Ascending aorta (tissue), 2 donors: ENCODE measurements at regions of chr18 and their contacts with region 1.

Region 1: DNA sequence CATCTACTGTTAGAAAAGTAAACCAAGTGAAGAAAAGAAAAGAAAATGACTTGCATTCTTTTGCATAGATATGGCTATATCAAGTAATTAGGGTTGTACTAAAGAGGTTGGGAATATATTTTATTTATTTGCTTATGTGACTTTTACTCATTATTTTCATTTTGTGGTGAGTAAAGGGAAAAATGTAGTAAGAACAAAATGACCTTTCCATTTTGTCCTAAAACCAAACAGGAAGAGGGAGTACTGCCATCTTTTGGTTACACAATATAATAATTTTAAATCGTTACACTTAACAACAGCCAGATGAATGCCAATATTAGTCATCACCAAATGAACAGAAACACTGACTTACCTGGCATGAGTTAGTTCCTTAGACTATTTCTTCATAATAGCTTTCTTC is 47.3 kb upstream of the NDUFV2 start:
- DNase-seq: no peak
- H3K4me3 ChIP-seq: no peak overlapping the region
- H3K27ac ChIP-seq: peak overlapping the region; percentile 52 to 57
- H3K4me1 ChIP-seq: peaks cover 0 to 7% of the 10 kb centered on the region in 2 donors
- H3K27me3 ChIP-seq: no peaks in the 10 kb centered on the region
- CTCF ChIP-seq: no peak

Region 2: DNA sequence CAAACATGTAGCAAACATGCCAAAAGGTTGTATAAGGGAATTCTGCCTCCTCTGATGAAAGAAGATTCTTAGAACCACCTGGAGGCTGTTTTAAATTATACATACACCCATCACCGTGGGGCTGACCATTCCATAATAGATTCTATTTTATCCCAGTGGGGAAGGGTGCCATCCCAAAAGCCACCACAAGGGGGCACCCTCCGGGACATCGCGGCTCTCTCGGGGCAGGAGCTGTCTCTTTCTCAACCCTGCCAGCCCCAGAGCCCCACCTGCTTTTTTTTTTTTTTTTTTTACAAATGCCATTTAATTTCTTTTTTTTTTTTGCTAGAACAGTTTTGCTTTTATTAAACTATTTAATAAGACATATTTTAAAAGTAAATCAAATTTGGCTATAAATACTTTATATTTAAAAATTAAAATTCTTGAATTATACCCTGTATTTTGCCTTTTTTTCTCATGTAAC is 358.4 kb before region 1 on chr18:
- intact Hi-C with region 1: loop called (anchors 1 kb)
- DNase-seq: peak in 1 of 2 donors; percentile 87
- H3K4me3 ChIP-seq: no peak overlapping the region
- H3K27ac ChIP-seq: no peak overlapping the region
- H3K4me1 ChIP-seq: no peaks in the 10 kb centered on the region
- H3K27me3 ChIP-seq: no peaks in the 10 kb centered on the region
- CTCF ChIP-seq: peak; percentile 69 to 90 (median 85)

Region 3: DNA sequence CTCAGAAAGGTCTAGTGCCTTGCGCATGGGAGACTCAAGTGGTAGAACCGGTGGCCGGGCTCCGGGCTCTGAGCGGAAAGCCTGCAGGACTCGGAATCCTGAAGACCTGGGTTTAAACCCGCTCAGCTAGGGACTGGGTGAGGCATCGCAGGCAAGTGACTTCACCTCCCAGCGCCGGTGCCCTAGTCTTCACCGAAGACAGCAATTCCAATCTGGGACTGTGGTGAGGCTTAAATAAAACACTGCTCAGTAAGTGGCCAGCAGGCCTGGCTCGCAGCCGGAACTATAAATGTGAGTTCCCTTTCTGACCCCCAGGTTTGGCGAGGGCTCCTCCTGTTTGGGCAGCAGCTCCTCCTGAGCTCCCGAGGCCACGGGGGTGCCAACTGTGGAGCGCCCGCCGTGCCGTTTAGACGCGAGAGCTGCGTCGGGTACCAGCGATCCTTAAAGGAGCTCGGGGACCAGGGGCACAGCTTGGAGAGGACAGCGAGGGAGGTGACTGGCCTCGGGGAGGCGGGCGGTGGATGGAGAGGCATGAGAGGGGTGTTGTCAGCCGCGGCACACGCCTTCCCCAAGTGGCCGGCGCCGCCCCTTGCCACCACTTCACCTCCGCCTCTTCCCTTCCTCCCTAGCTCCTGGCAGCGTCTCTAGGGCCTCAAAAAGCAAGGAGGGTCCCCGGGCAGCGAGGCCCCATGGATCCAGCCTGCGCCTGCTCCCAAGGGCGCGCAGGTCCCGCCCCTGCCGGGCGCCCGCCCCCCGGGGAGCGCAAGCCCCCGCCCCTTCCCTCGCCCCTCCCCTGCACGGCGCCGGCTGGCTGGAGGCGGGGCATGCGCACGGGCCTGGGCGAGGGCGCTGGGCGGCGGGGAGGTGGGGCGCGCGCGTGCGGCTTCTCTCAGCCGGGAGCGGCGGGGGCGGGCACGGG is 350.6 kb before region 1 on chr18:
- intact Hi-C with region 1: loop called (anchors 2 kb)
- DNase-seq: peak; percentile 39 to 92
- H3K4me3 ChIP-seq: peak overlapping the region; percentile 79 to 97
- H3K27ac ChIP-seq: peak overlapping the region; percentile 89 to 96
- H3K4me1 ChIP-seq: peaks cover 4 to 11% of the 10 kb centered on the region in 2 donors
- H3K27me3 ChIP-seq: no peaks in the 10 kb centered on the region
- CTCF ChIP-seq: peak in 1 of 3 experiments; percentile 4

Region 4: GRCh38 chr18:8988261-8988871 is 66.8 kb before region 1 on chr18:
- intact Hi-C with region 1: loop called (anchors 10 kb)
- DNase-seq: peak in 1 of 2 donors; percentile 66
- H3K4me3 ChIP-seq: no peak overlapping the region
- H3K27ac ChIP-seq: no peak overlapping the region
- H3K4me1 ChIP-seq: peaks cover 0 to 3% of the 10 kb centered on the region in 2 donors
- H3K27me3 ChIP-seq: no peaks in the 10 kb centered on the region
- CTCF ChIP-seq: peak; percentile 27 to 77 (median 70)

Region 5: DNA sequence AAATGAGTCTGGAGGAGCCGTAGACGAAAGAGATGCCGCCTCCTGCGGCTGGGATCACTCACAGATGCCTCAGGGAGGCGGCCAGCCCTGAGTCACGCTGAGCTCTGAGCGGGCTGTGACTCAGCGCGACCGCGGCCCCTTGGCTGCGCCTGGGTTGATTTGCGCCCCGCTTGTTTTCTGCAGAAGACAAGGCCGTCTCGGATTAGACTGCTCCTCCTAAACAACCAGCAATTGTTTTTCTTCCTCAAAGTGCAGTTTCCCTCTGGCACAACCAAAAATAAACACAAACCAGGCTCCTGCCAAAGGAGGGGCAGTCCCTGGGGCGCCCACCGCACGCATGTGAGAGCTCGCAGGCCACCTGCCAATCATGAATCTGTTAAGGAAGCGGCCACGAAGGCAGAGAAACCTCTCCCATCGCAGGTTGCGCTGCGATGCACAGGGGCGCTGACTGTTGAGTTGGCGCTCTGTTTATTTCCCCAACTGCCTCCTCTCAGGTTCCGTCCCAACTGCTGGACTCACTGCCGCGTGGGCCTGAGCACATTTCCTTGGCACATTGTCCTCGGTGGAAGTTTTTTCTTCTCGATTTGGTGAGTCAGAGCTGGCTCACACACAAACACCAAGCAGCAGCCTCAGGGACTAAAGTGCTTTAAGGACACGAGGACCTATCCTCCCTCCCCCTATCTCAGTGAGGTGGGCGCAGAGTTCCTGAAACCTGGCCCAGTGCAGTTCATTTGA is 37.8 kb before region 1 on chr18:
- intact Hi-C with region 1: loop called (anchors 2 kb)
- DNase-seq: peak; percentile 58 to 86
- H3K4me3 ChIP-seq: peak overlapping the region; percentile 34 to 62
- H3K27ac ChIP-seq: peak overlapping the region; percentile 63 to 94
- H3K4me1 ChIP-seq: peaks cover 3 to 6% of the 10 kb centered on the region in 2 donors
- H3K27me3 ChIP-seq: no peaks in the 10 kb centered on the region
- CTCF ChIP-seq: no peak

Region 6: GRCh38 chr18:9066817-9067306 is 11.7 kb after region 1 on chr18:
- intact Hi-C with region 1: no loop called
- DNase-seq: no peak
- H3K4me3 ChIP-seq: no peak overlapping the region
- H3K27ac ChIP-seq: no peak overlapping the region
- H3K4me1 ChIP-seq: no peaks in the 10 kb centered on the region
- H3K27me3 ChIP-seq: no peaks in the 10 kb centered on the region
- CTCF ChIP-seq: no peak

Region 7: DNA sequence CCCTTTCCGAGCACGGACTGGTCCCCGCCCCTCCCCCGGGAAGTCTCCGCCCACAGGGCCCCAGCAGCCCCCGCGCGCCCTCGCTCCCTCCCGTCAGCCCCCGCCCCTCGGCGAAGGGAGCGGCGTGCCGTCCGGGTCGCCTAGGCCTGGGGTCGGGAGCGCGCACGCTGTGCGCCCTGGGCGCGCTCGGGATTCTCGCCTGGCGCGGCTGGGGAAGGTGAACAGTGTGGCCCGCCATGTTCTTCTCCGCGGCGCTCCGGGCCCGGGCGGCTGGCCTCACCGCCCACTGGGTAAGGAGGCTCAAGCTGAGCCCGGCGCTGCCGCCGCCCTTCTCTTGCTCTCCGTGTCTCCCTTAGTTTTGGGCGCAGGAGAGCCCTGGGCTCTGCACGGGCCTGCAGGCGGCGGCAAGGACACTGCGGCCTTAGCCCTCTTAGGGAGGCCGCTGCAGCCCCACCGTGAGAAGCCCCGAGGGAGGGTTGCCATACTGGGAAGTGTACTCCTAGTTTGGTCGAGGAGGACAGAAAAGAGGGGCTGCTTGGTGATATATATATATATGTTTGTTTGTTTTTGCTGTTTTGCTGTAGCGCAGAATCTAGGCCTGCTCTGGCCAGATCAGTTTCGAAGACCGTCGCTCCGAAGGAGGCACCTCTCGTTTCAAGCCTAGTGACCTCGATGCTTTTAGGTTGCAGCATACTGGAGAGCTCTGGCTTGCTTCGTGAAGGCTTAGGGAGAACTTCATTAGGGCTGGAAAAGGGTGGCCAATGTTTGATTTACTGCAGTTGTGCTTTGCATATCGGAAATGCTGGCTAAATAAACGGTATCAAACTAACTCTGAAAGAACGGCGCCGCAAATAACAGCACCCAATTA is 47.6 kb after region 1 on chr18 and contains the start of gene NDUFV2:
- intact Hi-C with region 1: loop called (anchors 5 kb)
- DNase-seq: peak; percentile 80 to 98
- H3K4me3 ChIP-seq: peak within 1 kb of the TSS; percentile 67 to 77
- H3K27ac ChIP-seq: peak within 1 kb of the TSS; percentile 91 to 92
- H3K4me1 ChIP-seq: peaks cover 3 to 31% of the 10 kb centered on the region in 2 donors
- H3K27me3 ChIP-seq: no peaks in the 10 kb centered on the region
- CTCF ChIP-seq: peak in 1 of 3 experiments; percentile 16
- total RNA-seq, gene NDUFV2: 48.6 TPM

Region 8: DNA sequence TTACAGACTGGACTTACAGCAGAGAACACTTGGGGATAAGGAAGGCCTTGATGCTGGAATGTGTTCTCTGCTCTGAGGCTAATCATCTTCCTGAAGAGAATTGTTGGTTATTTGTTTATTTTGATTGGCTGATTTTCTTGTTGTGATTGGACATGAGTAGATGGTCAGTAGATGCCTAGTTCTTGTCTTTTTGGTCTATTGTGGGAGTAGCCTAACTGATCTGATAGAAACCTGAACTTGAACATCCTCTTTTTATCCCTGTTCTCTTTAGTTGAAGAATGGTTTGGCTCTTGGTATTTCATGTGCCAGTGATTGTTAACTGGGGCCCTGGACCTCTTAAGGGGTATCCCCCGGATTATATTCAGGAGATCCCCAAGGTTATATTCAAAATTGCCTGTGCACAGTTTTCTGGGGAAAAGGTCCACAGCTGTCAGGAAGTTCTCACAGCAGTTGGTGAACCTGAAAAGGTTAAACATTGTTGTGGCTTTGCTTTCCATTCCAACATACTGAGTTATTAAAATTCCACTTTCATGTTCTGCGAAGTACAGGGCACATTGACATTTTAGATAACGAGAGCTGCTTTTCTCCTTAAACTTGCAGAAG is 293.0 kb after region 1 on chr18:
- intact Hi-C with region 1: no loop called
- DNase-seq: no peak
- H3K4me3 ChIP-seq: peak overlapping the region in 1 of 2 donors; percentile 15
- H3K27ac ChIP-seq: peak overlapping the region; percentile 59 to 72
- H3K4me1 ChIP-seq: peaks cover 0 to 8% of the 10 kb centered on the region in 2 donors
- H3K27me3 ChIP-seq: no peaks in the 10 kb centered on the region
- CTCF ChIP-seq: no peak